PC-3 (cell line): ENCODE measurements at regions of chr10 and their contacts with region 1.

Region 1: GRCh38 chr10:33291053-33291592 is 43.3 kb downstream of the NRP1 start:
- DNase-seq: peak; percentile 100
- ATAC-seq: peak; percentile 78
- H3K4me3 ChIP-seq: peak overlapping the region; percentile 16
- H3K27ac ChIP-seq: peak overlapping the region; percentile 60
- H3K4me1 ChIP-seq: peaks cover 78% of the 10 kb centered on the region
- H3K27me3 ChIP-seq: no peaks in the 10 kb centered on the region
- CTCF ChIP-seq: no peak

Region 2: DNA sequence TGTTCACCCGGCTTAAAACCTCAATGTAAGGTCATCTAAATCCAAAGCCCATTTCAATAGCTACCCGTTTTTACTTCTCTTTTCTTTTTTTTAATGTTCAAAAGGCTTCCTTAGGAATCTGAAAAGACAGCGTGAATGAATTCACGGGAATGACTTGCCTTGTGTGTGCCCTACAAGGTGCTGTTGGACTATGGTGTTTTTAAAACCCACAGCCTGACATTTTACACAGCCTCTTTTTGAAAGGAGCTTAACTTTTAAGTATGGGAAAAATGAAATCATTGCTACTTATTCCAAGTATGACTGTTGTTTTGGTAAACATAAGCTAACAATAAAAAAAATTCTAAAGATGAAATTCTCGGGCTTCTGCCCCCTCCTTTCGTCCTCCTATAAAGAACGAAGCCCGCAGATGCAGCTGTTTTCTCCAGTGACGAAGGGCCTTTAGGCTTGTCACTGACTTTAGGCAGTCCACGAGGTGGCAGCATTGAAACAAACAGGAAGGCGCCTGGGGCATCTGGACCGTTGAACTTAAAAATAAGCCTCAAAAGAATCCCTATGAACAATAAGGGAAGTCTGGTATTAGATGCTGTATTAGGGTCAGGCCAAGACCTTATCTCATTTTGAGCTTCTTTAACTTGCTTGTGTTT is 97.9 kb before region 1 on chr10:
- CTCF ChIA-PET with region 1: interaction called, 13 read pairs
- POLR2A ChIA-PET with region 1: no interaction called
- intact Hi-C with region 1: loop called (anchors 1 kb)
- DNase-seq: peak; percentile 100
- ATAC-seq: peak; percentile 74
- H3K4me3 ChIP-seq: no peak overlapping the region
- H3K27ac ChIP-seq: peak overlapping the region; percentile 72
- H3K4me1 ChIP-seq: peaks cover 54% of the 10 kb centered on the region
- H3K27me3 ChIP-seq: no peaks in the 10 kb centered on the region
- CTCF ChIP-seq: no peak

Region 3: GRCh38 chr10:33216661-33217427 is 74.3 kb before region 1 on chr10:
- CTCF ChIA-PET with region 1: interaction called, 4 read pairs
- POLR2A ChIA-PET with region 1: no interaction called
- intact Hi-C with region 1: loop called (anchors 1 kb)
- DNase-seq: peak; percentile 100
- ATAC-seq: peak; percentile 91
- H3K4me3 ChIP-seq: peak overlapping the region; percentile 6; the same call in 1 of the 2 replicates
- H3K27ac ChIP-seq: peak overlapping the region; percentile 65
- H3K4me1 ChIP-seq: peaks cover 46% of the 10 kb centered on the region
- H3K27me3 ChIP-seq: no peaks in the 10 kb centered on the region
- CTCF ChIP-seq: no peak

Region 4: GRCh38 chr10:33248638-33249037 is 42.5 kb before region 1 on chr10:
- CTCF ChIA-PET with region 1: interaction called, 3 read pairs
- POLR2A ChIA-PET with region 1: interaction called, 3 read pairs
- intact Hi-C with region 1: loop called (anchors 1 kb)
- DNase-seq: peak; percentile 100
- ATAC-seq: peak; percentile 43
- H3K4me3 ChIP-seq: no peak overlapping the region
- H3K27ac ChIP-seq: peak overlapping the region; percentile 65
- H3K4me1 ChIP-seq: peaks cover 52% of the 10 kb centered on the region
- H3K27me3 ChIP-seq: no peaks in the 10 kb centered on the region
- CTCF ChIP-seq: no peak

Region 5: GRCh38 chr10:33273295-33274002 is 17.7 kb before region 1 on chr10:
- CTCF ChIA-PET with region 1: interaction called, 11 read pairs
- POLR2A ChIA-PET with region 1: interaction called, 9 read pairs
- intact Hi-C with region 1: loop called (anchors 1 kb)
- DNase-seq: peak; percentile 100
- ATAC-seq: peak; percentile 87
- H3K4me3 ChIP-seq: peak overlapping the region; percentile 47
- H3K27ac ChIP-seq: peak overlapping the region; percentile 71
- H3K4me1 ChIP-seq: peaks cover 66% of the 10 kb centered on the region
- H3K27me3 ChIP-seq: no peaks in the 10 kb centered on the region
- CTCF ChIP-seq: no peak

Region 6: GRCh38 chr10:33314811-33315561 is 23.9 kb after region 1 on chr10:
- CTCF ChIA-PET with region 1: no interaction called
- POLR2A ChIA-PET with region 1: no interaction called
- intact Hi-C with region 1: loop called (anchors 2 kb)
- DNase-seq: peak; percentile 92
- ATAC-seq: peak; percentile 60
- H3K4me3 ChIP-seq: no peak overlapping the region
- H3K27ac ChIP-seq: peak overlapping the region; percentile 55
- H3K4me1 ChIP-seq: peaks cover 35% of the 10 kb centered on the region
- H3K27me3 ChIP-seq: no peaks in the 10 kb centered on the region
- CTCF ChIP-seq: no peak

Region 7: GRCh38 chr10:35184527-35185171 is 1893.5 kb after region 1 on chr10:
- CTCF ChIA-PET with region 1: no interaction called
- POLR2A ChIA-PET with region 1: no interaction called
- intact Hi-C with region 1: loop called (anchors 5 kb)
- DNase-seq: no peak
- ATAC-seq: no peak
- H3K4me3 ChIP-seq: no peak overlapping the region
- H3K27ac ChIP-seq: no peak overlapping the region
- H3K4me1 ChIP-seq: peaks cover 10% of the 10 kb centered on the region
- H3K27me3 ChIP-seq: no peaks in the 10 kb centered on the region
- CTCF ChIP-seq: no peak